Naive thymus-derived CD8-positive, alpha-beta T cell (primary cell): ENCODE measurements at regions of chr17 and their contacts with region 1.

Region 1: DNA sequence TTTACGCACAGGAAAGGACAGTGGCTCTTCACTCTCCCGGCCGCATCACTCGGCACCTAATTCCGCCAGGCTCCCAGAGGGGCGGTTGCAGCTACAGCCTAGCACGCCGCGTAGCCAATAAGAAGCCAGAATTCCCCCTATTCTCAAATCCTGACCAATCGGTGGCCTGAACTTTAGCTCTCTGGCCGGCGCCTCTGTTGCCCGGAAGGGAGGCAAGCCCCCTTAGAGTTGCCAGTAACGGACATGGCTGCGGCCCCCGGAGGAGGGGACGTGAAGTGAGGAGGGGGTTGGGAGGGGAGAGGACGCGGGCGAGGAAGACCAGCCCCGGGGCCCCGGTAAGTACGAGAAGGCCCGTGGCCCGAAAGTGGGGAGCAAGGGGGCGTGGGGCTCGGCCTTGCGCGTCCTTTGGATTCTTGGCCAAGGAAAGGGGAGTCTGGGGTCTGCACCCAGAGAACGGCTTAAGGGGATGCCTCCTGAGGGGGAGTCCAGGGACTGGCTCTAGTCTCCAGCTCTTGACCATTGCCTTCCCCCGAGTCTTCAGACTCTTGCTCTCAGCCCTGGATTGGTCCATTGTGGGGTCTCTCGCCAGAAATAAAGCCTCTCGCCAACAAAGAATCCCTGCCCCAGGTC is at the start of gene TMEM94:
- DNase-seq: peak; percentile 75 to 97 (median 90)
- ATAC-seq: peak; percentile 94 to 98
- H3K4me3 Mint-ChIP-seq: peak within 1 kb of the TSS; percentile 88 to 96 (median 94)
- H3K27ac Mint-ChIP-seq: peak within 1 kb of the TSS; percentile 84 to 98 (median 95)
- H3K4me1 Mint-ChIP-seq: peaks cover 11 to 54% (median 36%) of the 10 kb centered on the region in 4 donors
- H3K27me3 Mint-ChIP-seq: no peaks in the 10 kb centered on the region
- polyA plus RNA-seq, gene TMEM94: 8.4 to 23.5 (median 11.5) TPM

Region 2: GRCh38 chr17:75325827-75326225 is 130.7 kb before region 1 on chr17:
- POLR2A ChIA-PET with region 1: no interaction called
- DNase-seq: no peak
- ATAC-seq: no peak
- H3K4me3 Mint-ChIP-seq: no peak overlapping the region
- H3K27ac Mint-ChIP-seq: peak overlapping the region; percentile 25 to 88 (median 72)
- H3K4me1 Mint-ChIP-seq: peaks cover 5 to 65% (median 36%) of the 10 kb centered on the region in 4 donors
- H3K27me3 Mint-ChIP-seq: no peaks in the 10 kb centered on the region

Region 3: GRCh38 chr17:75487351-75488070 is 31.0 kb after region 1 on chr17:
- POLR2A ChIA-PET with region 1: interaction called, 29 read pairs
- DNase-seq: peak; percentile 27 to 75 (median 57)
- ATAC-seq: peak; percentile 95 to 96
- H3K4me3 Mint-ChIP-seq: peak overlapping the region; percentile 68 to 93 (median 81)
- H3K27ac Mint-ChIP-seq: peak overlapping the region; percentile 97 to 99 (median 98)
- H3K4me1 Mint-ChIP-seq: peaks cover 20 to 42% (median 34%) of the 10 kb centered on the region in 4 donors
- H3K27me3 Mint-ChIP-seq: no peaks in the 10 kb centered on the region

Region 4: DNA sequence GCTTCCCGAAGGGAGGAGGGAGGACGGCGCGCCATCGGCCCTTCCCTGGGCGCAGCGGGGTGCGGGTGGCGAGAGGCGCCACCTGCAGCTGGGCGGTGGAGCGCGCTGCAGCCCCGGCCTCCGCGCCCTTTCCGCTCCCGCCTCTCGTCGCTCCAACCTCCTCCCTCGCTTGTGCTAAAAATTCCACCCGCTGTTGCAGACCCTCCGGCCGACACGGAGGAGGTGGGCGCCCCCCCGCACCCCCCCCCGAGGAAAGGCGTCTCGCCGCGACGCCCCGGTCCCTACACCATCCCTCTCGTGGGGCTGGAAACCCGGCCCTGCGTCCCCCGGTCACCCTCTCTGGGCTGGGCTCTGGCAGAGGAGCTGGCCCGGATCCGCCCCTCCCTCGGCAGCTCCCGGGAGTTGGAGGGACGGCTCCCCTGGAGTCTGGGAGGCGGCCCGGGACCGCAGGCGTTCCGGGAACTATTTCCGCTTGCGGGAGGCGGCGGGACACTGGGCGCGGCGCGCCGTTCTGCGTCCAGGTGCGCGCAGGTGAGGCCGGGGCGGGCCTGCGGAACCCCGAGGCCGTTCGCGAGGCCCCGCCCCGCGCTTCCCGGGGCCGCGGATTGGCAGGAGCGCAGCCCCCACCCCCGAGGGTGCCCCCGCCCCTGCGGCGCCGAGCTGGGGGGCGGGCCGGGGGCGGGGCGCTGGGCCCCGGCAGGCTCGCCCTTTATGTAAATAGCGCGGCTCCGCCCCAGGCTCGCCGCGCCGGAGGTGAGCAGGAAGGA is 68.6 kb after region 1 on chr17 and contains the start of gene LLGL2:
- POLR2A ChIA-PET with region 1: interaction called, 11 read pairs
- DNase-seq: peak; percentile 78 to 94 (median 88)
- ATAC-seq: peak; percentile 88 to 89
- H3K4me3 Mint-ChIP-seq: peak within 1 kb of the TSS; percentile 71 to 88 (median 81)
- H3K27ac Mint-ChIP-seq: peak within 1 kb of the TSS in 8 of 10 donors; percentile 53 to 90 (median 78)
- H3K4me1 Mint-ChIP-seq: peaks cover 3 to 21% (median 12%) of the 10 kb centered on the region in 4 donors
- H3K27me3 Mint-ChIP-seq: no peaks in the 10 kb centered on the region
- polyA plus RNA-seq, gene LLGL2: 13.4 to 21.8 (median 15.0) TPM

Region 5: DNA sequence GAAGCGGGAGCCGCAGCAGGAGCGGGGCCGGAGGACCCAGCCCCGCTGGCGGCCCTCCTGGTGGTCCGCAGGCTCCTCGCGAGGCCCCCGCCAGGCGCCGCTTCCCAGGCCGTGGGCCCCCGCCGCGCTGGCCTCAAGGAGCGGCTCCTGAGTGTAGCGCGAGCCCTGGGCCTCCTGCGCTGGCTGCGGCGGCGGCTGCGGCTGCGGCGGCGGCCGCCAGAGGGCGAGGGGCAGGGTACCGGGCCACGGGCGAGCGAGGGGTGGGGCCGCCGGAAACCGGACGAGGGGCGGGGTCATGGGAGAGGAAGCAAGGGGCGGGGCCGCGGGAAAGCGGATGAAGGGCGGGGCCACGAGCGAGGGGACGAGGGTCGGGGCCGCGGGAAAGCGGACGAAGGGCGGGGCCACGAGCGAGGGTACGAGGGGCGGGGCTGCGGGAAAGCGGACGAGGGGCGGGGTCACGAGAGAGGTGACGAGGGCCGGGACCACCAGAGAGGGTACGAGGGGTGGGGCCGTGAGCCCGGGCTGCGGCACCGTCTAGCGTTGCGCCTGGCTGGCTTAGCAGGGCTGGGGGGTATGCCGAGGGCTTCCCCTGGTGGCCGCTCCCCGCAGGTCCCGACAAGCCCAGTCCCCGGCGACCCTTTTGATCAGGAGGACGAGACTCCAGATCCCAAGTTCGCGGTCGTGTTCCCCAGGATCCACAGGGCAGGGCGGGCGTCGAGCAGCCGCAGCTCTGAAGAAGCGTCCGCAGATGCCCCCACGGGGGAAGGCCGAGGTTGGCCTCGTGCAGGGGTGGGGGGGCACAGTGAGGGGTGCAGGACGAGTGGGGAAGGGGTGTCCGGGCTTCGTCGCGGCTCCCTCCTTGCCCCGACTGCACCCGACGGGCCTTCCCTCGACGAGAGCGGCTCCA is 132.7 kb after region 1 on chr17:
- POLR2A ChIA-PET with region 1: interaction called, 11 read pairs
- DNase-seq: peak; percentile 89 to 98 (median 94)
- ATAC-seq: peak; percentile 78 to 83
- H3K4me3 Mint-ChIP-seq: peak overlapping the region; percentile 67 to 95 (median 81)
- H3K27ac Mint-ChIP-seq: peak overlapping the region in 8 of 10 donors; percentile 55 to 96 (median 88)
- H3K4me1 Mint-ChIP-seq: peaks cover 3 to 20% (median 11%) of the 10 kb centered on the region in 4 donors
- H3K27me3 Mint-ChIP-seq: no peaks in the 10 kb centered on the region